Activated naive CD4-positive, alpha-beta T cell treated with anti-CD3 and anti-CD28 coated beads for 36 hours (primary cell): ENCODE measurements at regions of chr2 and their contacts with region 1.

Region 1: DNA sequence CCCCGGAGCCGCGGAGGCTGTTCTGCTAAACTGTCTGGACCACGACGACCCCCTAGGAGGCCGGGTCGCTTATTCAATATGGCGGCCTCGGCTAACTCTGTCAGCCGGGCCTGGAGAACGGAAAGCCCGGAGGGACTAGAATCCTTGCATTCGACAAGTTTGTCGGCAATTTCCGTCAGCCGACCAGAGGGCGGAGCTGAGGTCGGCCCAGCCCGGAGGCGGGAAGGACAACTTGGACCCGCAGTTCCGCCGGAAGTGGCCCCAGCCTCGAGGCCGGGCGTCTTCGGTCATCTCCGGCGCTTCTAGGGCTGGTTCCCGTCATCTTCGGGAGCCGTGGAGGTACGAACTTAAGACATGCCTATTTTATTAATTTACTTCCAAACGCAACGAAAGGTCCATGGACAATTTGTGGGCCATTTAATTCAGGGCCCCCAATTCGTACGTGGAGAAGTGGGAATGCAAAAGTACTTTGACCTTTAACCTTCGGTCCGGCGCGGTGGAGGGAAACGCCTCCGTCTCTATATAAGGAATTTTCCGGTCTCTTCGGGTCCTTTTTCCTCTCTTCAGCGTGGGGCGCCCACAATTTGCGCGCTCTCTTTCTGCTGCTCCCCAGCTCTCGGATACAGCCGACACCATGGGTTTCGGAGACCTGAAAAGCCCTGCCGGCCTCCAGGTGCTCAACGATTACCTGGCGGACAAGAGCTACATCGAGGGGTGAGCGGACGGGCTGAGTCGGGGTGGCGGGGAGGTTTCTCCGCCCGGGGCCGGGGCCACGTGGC is at the starts of genes EEF1B2 and NDUFS1:
- DNase-seq: peak; percentile 98
- H3K4me3 Mint-ChIP-seq: peak within 1 kb of the TSS; percentile 96
- H3K27ac Mint-ChIP-seq: peak within 1 kb of the TSS; percentile 97
- H3K4me1 Mint-ChIP-seq: peaks cover 50% of the 10 kb centered on the region
- H3K27me3 Mint-ChIP-seq: no peaks in the 10 kb centered on the region
- total RNA-seq, gene EEF1B2: 1,328 to 1,373 TPM
- total RNA-seq, gene NDUFS1: 81.1 to 83.3 TPM

Region 2: DNA sequence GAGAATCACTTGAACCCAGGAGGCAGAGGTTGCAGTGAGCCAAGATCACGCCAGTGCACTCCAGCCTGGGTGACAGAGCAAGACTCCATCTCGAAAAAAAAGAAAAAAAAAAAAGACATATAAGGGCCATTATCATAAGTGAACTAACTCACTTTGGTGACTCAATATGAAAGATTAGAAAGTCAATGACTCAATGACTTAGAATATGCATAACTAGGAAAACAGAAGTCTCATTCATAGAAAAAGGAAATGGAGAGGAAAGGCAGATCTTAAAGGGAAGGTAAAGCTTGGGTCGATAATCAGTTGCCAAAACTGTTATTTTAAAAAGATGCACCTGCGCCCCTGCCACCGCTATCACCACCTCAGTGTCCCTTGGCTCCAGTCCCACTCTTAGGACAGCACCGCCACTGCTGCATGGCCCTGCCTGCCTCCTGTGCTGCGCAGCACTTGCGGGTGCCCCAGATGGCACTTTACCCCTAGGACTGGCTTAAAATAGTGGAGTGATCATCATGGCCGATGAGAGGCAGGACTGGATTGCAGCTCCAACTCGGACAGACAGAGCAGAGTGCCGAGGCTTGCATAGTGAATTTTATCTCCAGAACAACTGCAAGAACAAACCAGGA is 128.3 kb before region 1 on chr2:
- CTCF ChIA-PET with region 1: no interaction called
- intact Hi-C with region 1: loop called (anchors 1 kb)
- DNase-seq: no peak
- H3K4me3 Mint-ChIP-seq: no peak overlapping the region
- H3K27ac Mint-ChIP-seq: no peak overlapping the region
- H3K4me1 Mint-ChIP-seq: peaks cover 58% of the 10 kb centered on the region
- H3K27me3 Mint-ChIP-seq: no peaks in the 10 kb centered on the region

Region 3: GRCh38 chr2:206230060-206230762 is 70.7 kb after region 1 on chr2:
- CTCF ChIA-PET with region 1: no interaction called
- intact Hi-C with region 1: no loop called
- DNase-seq: no peak
- H3K4me3 Mint-ChIP-seq: no peak overlapping the region
- H3K27ac Mint-ChIP-seq: no peak overlapping the region
- H3K4me1 Mint-ChIP-seq: peaks cover 5% of the 10 kb centered on the region
- H3K27me3 Mint-ChIP-seq: peaks cover 8% of the 10 kb centered on the region

Region 4: DNA sequence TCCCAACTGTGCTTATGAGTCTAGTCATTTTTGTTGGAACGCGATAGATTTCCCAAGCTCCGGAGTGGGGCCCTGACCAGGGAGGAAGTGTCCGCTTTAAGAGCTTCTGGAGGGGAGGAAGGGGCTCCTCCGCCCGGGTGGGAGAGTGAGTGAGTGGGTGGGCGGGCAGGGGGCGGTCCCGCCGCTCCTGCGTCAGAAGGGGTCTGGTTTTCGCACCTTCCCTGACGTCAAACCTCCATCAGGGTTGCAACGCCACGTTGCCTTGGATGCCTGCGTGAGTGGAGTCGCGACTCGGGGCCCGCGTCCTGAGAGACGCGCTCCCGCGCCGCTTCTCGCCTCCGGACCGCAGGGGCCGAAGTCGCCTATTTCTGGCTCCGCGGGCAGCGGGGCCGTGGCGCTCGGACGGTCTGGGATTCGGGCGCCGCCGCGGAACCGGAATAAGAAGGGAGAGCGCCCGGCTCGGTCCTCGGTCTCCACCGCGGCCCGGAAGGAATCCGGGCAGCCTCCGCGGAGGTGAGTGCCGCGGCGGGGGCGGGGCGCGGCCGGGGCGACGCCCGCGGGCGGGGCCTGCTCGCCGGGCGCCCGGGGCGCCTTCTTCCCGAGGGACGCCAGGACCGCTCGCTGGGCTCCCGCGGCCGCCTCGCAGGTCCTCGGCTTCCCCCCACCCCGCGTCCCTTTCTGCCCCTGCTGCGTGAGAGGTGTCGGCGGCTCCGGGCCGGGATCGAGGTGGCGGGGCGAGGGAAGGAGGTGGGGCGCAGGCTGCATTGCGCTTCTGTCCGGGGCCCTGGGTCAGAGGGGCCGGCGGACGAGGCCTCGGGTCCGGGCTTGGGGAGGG is 115.1 kb after region 1 on chr2 and contains the start of gene ZDBF2:
- CTCF ChIA-PET with region 1: interaction called, 3 read pairs
- intact Hi-C with region 1: loop called (anchors 2 kb)
- DNase-seq: peak; percentile 45
- H3K4me3 Mint-ChIP-seq: peak within 1 kb of the TSS; percentile 82
- H3K27ac Mint-ChIP-seq: peak within 1 kb of the TSS; percentile 63
- H3K4me1 Mint-ChIP-seq: peaks cover 11% of the 10 kb centered on the region
- H3K27me3 Mint-ChIP-seq: peaks cover 38% of the 10 kb centered on the region
- total RNA-seq, gene ZDBF2: 3.9 to 4.8 TPM

Region 5: GRCh38 chr2:206442833-206443734 is 283.5 kb after region 1 on chr2 and contains the start of gene ADAM23:
- CTCF ChIA-PET with region 1: no interaction called
- intact Hi-C with region 1: loop called (anchors 1 kb)
- DNase-seq: peak; percentile 42
- H3K4me3 Mint-ChIP-seq: peak within 1 kb of the TSS; percentile 76
- H3K27ac Mint-ChIP-seq: no peak within 1 kb of the TSS
- H3K4me1 Mint-ChIP-seq: peaks cover 13% of the 10 kb centered on the region
- H3K27me3 Mint-ChIP-seq: peaks cover 59% of the 10 kb centered on the region
- total RNA-seq, gene ADAM23: 0.10 to 0.42 TPM

Region 6: DNA sequence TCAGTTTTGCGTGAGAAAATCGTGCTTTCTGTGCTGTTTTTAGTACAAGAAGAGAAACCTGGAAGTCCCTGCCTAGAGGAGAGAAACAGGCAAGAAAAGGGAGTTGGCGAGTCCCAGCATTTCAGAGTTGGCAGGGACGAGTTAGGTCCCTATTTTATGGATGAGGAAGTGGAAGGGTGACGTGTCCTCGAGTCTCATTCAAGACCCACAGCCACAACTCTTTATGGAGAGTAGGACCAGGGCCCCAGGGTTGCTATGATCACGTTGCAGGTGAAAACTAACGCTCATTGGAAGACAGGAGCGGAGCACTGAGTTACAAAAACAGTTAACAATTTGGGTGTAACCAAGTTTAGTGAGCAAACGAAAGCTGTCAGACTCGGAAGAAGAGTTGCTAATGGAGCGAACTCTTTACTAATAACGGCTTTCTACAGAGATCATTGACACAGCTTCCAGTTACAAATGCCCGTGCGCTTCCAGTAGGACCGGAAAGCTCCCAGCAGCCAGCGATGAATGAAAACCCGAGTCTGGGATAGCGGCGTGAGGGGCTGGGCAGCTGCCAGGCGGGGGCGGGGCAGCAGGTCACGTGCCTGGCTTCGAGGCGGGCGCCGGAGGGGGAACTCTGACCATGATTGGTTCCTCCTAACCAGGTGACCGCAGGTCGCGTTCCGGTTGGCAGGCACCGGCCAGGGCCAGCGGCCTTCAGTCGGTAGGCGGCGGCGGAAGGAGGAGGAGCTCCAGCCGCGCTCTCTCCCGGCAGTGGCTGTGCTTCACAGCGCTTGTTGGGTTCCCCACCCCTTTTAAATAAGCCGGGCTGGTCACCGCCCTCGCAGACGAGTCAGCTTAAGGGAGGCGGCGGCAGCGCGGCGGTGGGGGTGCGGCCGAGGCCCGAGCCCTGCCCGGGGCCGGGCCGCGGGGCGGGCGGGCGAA is 1551.5 kb after region 1 on chr2 and contains the start of gene CCNYL1:
- CTCF ChIA-PET with region 1: no interaction called
- intact Hi-C with region 1: loop called (anchors 1 kb)
- DNase-seq: peak; percentile 98
- H3K4me3 Mint-ChIP-seq: peak within 1 kb of the TSS; percentile 88
- H3K27ac Mint-ChIP-seq: peak within 1 kb of the TSS; percentile 56
- H3K4me1 Mint-ChIP-seq: peaks cover 26% of the 10 kb centered on the region
- H3K27me3 Mint-ChIP-seq: no peaks in the 10 kb centered on the region
- total RNA-seq, gene CCNYL1: 2.5 to 2.7 TPM